Activated T-helper 1 cell treated with anti-CD3 and anti-CD28 coated beads, Interleukin-12 subunit alpha, Interleukin-12 subunit beta, Interleukin-2, Interleukin-4 antibody, amounts not matched to agents 30 ng/mL and 10 ng/mL and 1 ng/mL, durations not matched to agents 14 hours and 24 hours and 36 hours (primary cell): ENCODE measurements at regions of chr12 and their contacts with region 1.

Region 1: GRCh38 chr12:48865434-48866290 is at the start of gene RND1:
- DNase-seq: peak; percentile 84
- H3K4me3 Mint-ChIP-seq: peak within 1 kb of the TSS; percentile 86
- H3K27ac Mint-ChIP-seq: peak within 1 kb of the TSS; percentile 83
- H3K4me1 Mint-ChIP-seq: peaks cover 28% of the 10 kb centered on the region
- H3K27me3 Mint-ChIP-seq: peaks cover 19% of the 10 kb centered on the region
- total RNA-seq, gene RND1: 7.9 and 9.3 TPM in 2 replicates

Region 2: DNA sequence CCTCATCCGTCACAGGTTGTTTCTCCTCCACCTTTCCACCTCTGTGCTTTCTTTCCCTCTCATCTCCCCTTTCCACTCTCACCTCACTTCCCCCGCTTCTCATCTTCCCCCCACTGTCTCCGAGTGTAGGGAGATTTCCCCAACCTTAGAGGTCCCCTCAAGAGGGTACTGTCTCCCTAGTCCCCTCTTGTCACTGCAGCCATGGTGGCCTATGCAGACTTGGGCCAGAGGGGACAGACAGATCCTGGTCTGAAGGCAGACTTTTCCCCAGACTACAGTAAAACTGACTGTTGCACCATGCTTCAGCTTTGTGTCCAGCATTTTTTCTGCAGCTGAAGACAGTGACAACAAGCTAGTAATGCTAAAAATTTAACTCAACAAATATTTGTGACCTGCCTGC is 224.8 kb before region 1 on chr12:
- intact Hi-C with region 1: no loop called
- DNase-seq: no peak
- H3K4me3 Mint-ChIP-seq: no peak overlapping the region
- H3K27ac Mint-ChIP-seq: no peak overlapping the region
- H3K4me1 Mint-ChIP-seq: no peaks in the 10 kb centered on the region
- H3K27me3 Mint-ChIP-seq: no peaks in the 10 kb centered on the region

Region 3: GRCh38 chr12:48875944-48876515 is 10.4 kb after region 1 on chr12:
- intact Hi-C with region 1: no loop called
- DNase-seq: no peak
- H3K4me3 Mint-ChIP-seq: no peak overlapping the region
- H3K27ac Mint-ChIP-seq: no peak overlapping the region
- H3K4me1 Mint-ChIP-seq: no peaks in the 10 kb centered on the region
- H3K27me3 Mint-ChIP-seq: peaks cover 27% of the 10 kb centered on the region

Region 4: GRCh38 chr12:48890657-48891418 is 25.2 kb after region 1 on chr12:
- intact Hi-C with region 1: loop called (anchors 2 kb)
- DNase-seq: peak; percentile 63
- H3K4me3 Mint-ChIP-seq: peak overlapping the region; percentile 8
- H3K27ac Mint-ChIP-seq: no peak overlapping the region
- H3K4me1 Mint-ChIP-seq: peaks cover 5% of the 10 kb centered on the region
- H3K27me3 Mint-ChIP-seq: peaks cover 28% of the 10 kb centered on the region

Region 5: GRCh38 chr12:49309391-49309790 is 443.7 kb after region 1 on chr12:
- intact Hi-C with region 1: no loop called
- DNase-seq: no peak
- H3K4me3 Mint-ChIP-seq: no peak overlapping the region
- H3K27ac Mint-ChIP-seq: no peak overlapping the region
- H3K4me1 Mint-ChIP-seq: no peaks in the 10 kb centered on the region
- H3K27me3 Mint-ChIP-seq: peaks cover 47% of the 10 kb centered on the region